Right ventricle myocardium inferior (tissue), 1 donor: ENCODE measurements at regions of chr17 and their contacts with region 1.

Region 1: DNA sequence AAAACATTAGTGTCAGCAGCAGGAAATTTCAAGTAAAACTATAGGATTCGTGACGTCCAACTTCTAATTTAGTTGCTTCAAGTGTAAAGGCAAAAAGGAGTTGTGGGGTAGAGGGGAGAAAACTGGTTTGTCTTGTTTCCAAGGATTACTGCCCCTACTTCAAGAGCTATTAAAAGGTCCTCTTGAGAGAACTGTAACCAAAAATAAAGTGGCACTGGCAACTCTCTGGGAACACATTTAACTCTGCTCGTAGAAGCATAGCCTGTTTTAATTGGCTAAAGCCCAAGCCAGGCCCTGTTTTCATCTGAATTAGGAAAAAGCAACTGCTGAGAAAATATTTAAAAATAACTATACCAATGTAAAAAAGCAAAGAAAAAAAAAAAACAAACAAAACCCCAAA is 51.8 kb upstream of the AKAP1 start:
- DNase-seq: no peak
- ATAC-seq: peak; percentile 73

Region 2: DNA sequence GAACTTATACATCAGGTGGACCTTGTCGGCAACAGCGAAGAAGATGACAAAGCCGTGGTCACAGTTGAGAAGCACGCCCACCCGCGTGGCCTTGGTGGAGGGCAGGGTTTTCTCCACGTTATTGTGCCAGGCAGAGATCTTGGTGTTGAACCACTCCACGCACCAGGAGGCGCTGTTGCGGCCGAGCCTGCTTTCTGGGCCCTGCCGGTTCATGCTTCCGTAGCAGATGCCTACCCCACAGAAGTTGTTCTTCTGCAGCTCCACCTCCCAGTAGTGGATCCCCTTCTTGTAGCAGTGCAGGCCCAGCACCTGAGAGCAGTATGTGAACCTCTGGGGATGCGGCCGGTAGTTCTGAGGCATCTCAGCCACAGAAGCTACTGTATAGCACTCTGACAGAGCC is 141.5 kb before region 1 on chr17:
- intact Hi-C with region 1: no loop called
- DNase-seq: peak; percentile 79
- ATAC-seq: no peak

Region 3: GRCh38 chr17:56973524-56973923 is 59.8 kb before region 1 on chr17:
- intact Hi-C with region 1: no loop called
- DNase-seq: no peak
- ATAC-seq: no peak

Region 4: DNA sequence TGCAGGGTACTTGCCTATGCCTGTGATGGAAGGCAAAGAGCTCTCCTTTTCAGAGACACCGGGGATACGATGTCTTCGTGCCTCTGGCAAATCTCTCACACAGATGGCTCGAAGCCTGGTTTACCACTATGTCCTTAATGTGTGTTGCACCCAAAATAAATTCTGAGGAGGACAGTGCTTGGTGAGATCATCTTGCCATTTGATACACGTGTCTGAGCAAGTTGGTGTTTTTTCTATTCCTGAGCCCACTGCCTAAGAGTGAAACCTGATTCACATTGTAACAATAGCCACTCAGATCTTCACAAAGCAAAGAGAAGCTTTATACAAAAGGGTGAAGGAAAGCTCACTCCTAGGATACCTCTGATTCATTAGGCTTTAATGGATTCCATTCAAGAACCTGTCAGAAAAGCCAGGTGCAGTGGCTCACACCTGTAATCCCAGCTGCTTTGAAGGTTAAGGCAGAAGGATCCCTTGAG is 18.6 kb after region 1 on chr17:
- intact Hi-C with region 1: loop called (anchors 1 kb)
- DNase-seq: no peak
- ATAC-seq: peak; percentile 30

Region 5: DNA sequence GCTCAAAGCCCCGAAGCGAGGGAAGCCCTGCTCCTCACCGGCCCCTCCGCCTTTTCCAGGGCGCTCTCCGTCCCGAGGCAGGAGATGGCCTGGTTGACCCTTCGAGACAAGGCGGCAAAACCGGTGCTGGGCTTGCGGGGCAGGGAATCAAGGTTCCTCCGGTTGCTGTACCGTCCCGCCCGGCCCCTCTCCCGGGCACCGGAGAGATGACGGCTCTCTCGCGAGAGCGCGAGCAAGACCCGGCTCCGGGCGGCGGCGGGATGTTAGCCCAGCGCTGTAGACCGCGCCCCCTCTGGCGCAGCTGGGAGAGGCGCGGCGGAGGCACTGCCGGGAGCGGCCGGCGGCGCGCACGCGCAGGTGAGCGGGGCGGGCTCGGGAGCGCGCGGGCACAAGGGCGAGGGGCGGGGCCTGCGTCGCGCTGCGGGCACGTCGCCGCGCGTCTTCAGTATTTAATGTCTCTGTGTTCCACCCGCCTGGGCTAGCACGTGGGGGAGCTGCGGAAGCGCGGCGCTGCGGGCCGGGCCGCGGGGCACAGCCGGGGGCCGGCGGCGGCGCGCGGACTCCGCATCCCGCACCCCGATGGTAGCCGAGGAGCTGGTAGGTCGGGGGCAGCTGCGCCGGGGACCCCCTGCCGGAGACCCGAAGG is 51.6 kb after region 1 on chr17 and contains the start of gene AKAP1:
- intact Hi-C with region 1: loop called (anchors 2 kb)
- DNase-seq: peak; percentile 98
- ATAC-seq: peak; percentile 95
- total RNA-seq, gene AKAP1: 226 TPM